ENCODE measurements at regions of chr5 and their contacts with region 1.

Region 1: DNA sequence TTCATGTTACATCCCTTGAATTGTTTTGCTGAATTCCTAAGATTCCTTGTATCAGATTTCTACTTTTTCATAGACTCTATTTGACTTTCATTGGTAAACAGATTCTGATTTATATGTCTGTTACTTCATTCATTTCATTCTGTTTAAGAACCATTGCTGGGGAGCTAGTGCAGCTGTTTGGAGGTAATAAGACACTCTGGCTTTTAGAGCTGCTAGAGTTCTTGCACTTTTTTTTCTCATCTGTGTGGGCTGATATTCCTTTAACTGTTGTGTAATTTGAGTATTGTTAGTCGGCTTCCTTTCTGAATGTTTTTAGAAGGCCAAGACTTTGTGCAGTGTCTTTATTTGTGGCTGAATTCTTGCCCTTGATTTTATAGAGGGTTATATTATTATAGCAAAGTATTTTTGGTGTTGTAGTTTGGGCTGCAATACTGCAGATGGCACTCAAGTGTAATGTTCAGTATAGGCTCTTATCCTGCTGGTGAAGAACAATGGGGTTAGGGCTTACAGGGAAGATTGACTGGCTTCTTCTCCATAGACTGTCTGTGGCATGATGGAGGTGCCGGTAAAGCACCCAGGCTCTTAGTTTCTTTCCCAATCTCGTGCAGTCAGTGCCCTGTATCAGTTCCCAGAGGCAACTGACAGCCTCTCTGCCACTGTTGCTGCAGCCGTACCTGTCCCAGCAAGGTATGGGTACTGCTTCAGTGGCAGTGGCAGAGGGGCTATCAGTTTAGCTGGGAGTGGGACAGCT is 162.2 kb downstream of the OXCT1 start:
- DNase-seq: peak; percentile 25
- CTCF ChIP-seq: peak; percentile 63

Region 2: DNA sequence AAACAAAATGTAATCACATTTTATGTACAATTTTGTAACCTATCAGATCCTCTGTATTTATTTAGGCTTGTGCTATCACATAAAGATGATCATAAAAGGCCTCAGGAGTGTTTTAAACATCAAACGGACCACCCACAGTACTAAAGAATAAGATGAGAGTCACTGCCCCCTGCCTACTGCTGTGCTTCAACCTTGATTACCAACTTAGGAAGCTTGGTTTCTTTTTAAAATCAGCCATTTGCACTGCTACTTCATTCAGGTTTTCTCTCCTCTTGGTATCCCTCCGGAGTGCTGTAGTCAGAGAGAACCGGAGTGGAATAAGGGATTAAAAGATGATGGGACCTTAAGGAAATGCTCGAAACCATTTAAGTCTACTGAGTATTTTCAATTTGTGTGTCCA is 791.8 kb before region 1 on chr5:
- in situ Hi-C with region 1: no loop called
- DNase-seq: no peak
- CTCF ChIP-seq: no peak

Region 3: DNA sequence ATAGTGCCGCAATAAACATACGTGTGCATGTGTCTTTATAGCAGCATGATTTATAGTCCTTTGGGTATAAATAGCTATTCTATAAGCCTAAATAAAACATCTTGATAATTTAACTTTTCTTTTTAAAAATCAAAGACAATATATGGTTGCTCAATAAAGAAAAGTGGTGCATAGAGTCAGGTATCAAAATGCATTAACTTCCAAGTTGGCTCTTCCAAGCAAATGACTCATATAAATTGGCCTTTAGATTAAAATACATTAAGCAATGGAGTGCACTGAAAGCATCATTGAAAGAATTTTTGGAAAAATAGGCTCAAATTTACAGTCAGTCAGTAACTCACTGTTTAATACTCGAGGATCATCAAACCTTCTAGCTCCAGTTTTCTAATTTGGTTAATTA is 304.2 kb before region 1 on chr5:
- in situ Hi-C with region 1: no loop called
- DNase-seq: no peak
- CTCF ChIP-seq: no peak

Region 4: DNA sequence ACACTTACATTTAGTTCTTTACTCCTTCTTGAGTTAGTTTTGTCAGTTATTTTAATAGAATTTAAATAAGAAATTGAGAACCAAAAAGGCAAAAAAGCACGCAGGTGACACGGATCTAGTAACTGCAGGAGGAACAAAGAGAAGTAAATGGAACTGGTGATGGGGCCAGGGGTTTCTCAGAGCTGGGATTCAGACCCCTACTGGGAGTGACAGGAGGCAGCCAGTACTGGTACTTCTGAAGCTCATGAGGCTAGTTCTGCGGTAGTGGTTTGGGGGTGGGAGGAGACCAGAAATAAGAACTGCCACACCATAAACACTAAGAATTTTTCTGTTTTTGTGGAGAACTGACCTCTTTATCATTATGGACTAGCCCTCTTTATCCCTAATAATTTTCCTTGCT is 114.0 kb after region 1 on chr5:
- in situ Hi-C with region 1: loop called (anchors 10 kb)
- DNase-seq: no peak
- CTCF ChIP-seq: no peak

Region 5: GRCh38 chr5:41935544-41935943 is 227.5 kb after region 1 on chr5:
- in situ Hi-C with region 1: no loop called
- DNase-seq: no peak
- CTCF ChIP-seq: no peak

Measured in GM13977 (cell line).